CD14-positive monocyte (primary cell): ENCODE measurements at regions of chr14 and their contacts with region 1.

Region 1: GRCh38 chr14:22472935-22473854 is 115.8 kb downstream of the DAD1 start:
- DNase-seq: peak; percentile 27 to 46 (median 37)
- H3K4me3 ChIP-seq: no peak overlapping the region
- H3K4me3 Mint-ChIP-seq: no peak overlapping the region
- H3K27ac ChIP-seq: no peak overlapping the region
- H3K27ac Mint-ChIP-seq: no peak overlapping the region
- H3K4me1 ChIP-seq: no peaks in the 10 kb centered on the region
- H3K4me1 Mint-ChIP-seq: peaks cover 9% of the 10 kb centered on the region
- H3K27me3 ChIP-seq: no peaks in the 10 kb centered on the region
- H3K27me3 Mint-ChIP-seq: peaks cover 0 to 2% (median 2%) of the 10 kb centered on the region in 3 donors
- CTCF ChIP-seq: peak; percentile 77

Region 2: GRCh38 chr14:22314181-22314820 is 158.9 kb before region 1 on chr14:
- intact Hi-C with region 1: loop called (anchors 10 kb)
- DNase-seq: peak; percentile 26 to 50 (median 47)
- H3K4me3 ChIP-seq: no peak overlapping the region
- H3K4me3 Mint-ChIP-seq: no peak overlapping the region
- H3K27ac ChIP-seq: no peak overlapping the region
- H3K27ac Mint-ChIP-seq: no peak overlapping the region
- H3K4me1 ChIP-seq: peaks cover 6 to 7% of the 10 kb centered on the region in 2 donors
- H3K4me1 Mint-ChIP-seq: peaks cover 10% of the 10 kb centered on the region
- H3K27me3 ChIP-seq: no peaks in the 10 kb centered on the region
- H3K27me3 Mint-ChIP-seq: peaks cover 0 to 2% (median 0%) of the 10 kb centered on the region in 3 donors
- CTCF ChIP-seq: peak; percentile 86

Region 3: DNA sequence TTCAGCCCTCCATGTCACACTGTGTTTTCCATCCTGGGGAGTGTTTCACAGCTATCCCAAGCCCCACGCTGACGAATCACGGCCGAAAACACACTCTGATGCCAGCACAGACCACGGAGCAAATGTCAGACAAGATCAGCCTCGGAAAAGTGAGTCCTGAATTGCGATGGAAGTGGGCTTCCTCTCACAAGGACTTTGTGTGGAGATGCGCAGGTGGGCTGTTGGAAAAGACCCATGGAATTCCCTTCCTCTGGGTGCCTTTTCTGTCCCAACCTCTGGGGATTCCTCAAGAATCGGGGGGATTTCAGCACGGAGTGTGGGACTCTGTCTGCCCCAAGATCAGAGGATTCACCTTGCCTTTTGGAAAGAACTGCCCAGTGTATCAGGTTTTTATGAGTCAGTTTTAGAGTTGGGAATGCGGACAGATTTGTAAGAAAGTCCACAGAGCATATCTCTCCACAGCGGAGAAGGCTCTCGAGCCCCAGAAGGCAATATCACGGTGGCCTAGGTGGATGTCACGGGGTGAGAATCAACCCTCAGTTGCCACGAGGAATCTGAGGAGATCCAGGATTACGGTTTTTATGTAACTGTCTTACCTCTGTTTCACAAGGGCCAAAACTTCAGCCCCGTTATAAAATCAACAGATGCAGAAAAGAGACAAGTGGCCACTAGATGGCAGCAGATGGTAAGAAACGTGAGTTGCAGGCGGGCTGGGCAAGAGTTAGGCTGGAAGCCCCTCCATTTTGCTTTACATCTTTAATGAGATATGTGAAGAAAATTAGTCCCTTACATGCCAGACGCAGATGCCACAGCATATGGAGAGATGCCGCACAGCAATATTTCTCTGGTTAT is 86.0 kb before region 1 on chr14:
- intact Hi-C with region 1: loop called (anchors 2 kb)
- DNase-seq: peak; percentile 48 to 63 (median 58)
- H3K4me3 ChIP-seq: no peak overlapping the region
- H3K4me3 Mint-ChIP-seq: no peak overlapping the region
- H3K27ac ChIP-seq: no peak overlapping the region
- H3K27ac Mint-ChIP-seq: peak overlapping the region in 1 of 7 donors; percentile 52
- H3K4me1 ChIP-seq: peaks cover 3 to 4% of the 10 kb centered on the region in 2 donors
- H3K4me1 Mint-ChIP-seq: peaks cover 5% of the 10 kb centered on the region
- H3K27me3 ChIP-seq: no peaks in the 10 kb centered on the region
- H3K27me3 Mint-ChIP-seq: peaks cover 0 to 2% (median 1%) of the 10 kb centered on the region in 3 donors
- CTCF ChIP-seq: peak; percentile 85

Region 4: GRCh38 chr14:22393796-22394195 is 79.4 kb before region 1 on chr14:
- intact Hi-C with region 1: loop called in 1 of 2 experiments (anchors 2 kb)
- DNase-seq: no peak
- H3K4me3 ChIP-seq: no peak overlapping the region
- H3K4me3 Mint-ChIP-seq: no peak overlapping the region
- H3K27ac ChIP-seq: no peak overlapping the region
- H3K27ac Mint-ChIP-seq: no peak overlapping the region
- H3K4me1 ChIP-seq: peaks cover 10 to 12% of the 10 kb centered on the region in 2 donors
- H3K4me1 Mint-ChIP-seq: peaks cover 12% of the 10 kb centered on the region
- H3K27me3 ChIP-seq: no peaks in the 10 kb centered on the region
- H3K27me3 Mint-ChIP-seq: peaks cover 0 to 5% (median 2%) of the 10 kb centered on the region in 3 donors
- CTCF ChIP-seq: no peak